ENCODE measurements at regions of chr2 and their contacts with region 1.

Region 1: GRCh38 chr2:127453392-127454171 is 35.4 kb downstream of the PROC start:
- DNase-seq: peak; percentile 85
- ATAC-seq: peak; percentile 88
- H3K4me3 ChIP-seq: peak overlapping the region in 2 of 3 experiments; percentile 27 to 38; a peak in 4 of 6 replicates
- H3K27ac ChIP-seq: peak overlapping the region; percentile 93
- H3K4me1 ChIP-seq: peaks cover 83% of the 10 kb centered on the region
- H3K27me3 ChIP-seq: no peaks in the 10 kb centered on the region
- CTCF ChIP-seq: peak; percentile 94
- EP300 ChIP-seq: peak in 1 of 2 experiments; percentile 51; a peak in 2 of 4 replicates
- POLR2A ChIP-seq: peak; percentile 18 to 43; a peak in 1 of 4 replicates
- RAD21 ChIP-seq: peak; percentile 98

Region 2: GRCh38 chr2:127293748-127294562 is 159.6 kb before region 1 on chr2 and contains the start of gene ERCC3:
- CTCF ChIA-PET with region 1: no interaction called
- POLR2A ChIA-PET with region 1: interaction called, 35 read pairs
- in situ Hi-C with region 1: no loop called
- intact Hi-C with region 1: no loop called
- DNase-seq: peak; percentile 89
- ATAC-seq: peak; percentile 99
- H3K4me3 ChIP-seq: peak within 1 kb of the TSS; percentile 82 to 97 (median 88)
- H3K27ac ChIP-seq: peak within 1 kb of the TSS; percentile 69
- H3K4me1 ChIP-seq: peaks cover 22% of the 10 kb centered on the region
- H3K27me3 ChIP-seq: no peaks in the 10 kb centered on the region; a peak in 1 of 5 replicates
- CTCF ChIP-seq: no peak
- EP300 ChIP-seq: no peak
- POLR2A ChIP-seq: peak; percentile 92 to 97
- RAD21 ChIP-seq: peak; percentile 73
- total RNA-seq, gene ERCC3: 43.3 and 49.7 TPM in 2 replicates

Region 3: GRCh38 chr2:127355386-127356008 is 98.1 kb before region 1 on chr2:
- CTCF ChIA-PET with region 1: interaction called, 18 read pairs
- POLR2A ChIA-PET with region 1: no interaction called
- in situ Hi-C with region 1: no loop called
- intact Hi-C with region 1: loop called (anchors 1 kb)
- DNase-seq: peak; percentile 38
- ATAC-seq: peak; percentile 64; the same call in 2 of the 3 replicates
- H3K4me3 ChIP-seq: no peak overlapping the region
- H3K27ac ChIP-seq: no peak overlapping the region
- H3K4me1 ChIP-seq: peaks cover 60% of the 10 kb centered on the region
- H3K27me3 ChIP-seq: no peaks in the 10 kb centered on the region
- CTCF ChIP-seq: peak; percentile 61
- EP300 ChIP-seq: no peak
- POLR2A ChIP-seq: no peak
- RAD21 ChIP-seq: peak; percentile 23; the same call in 1 of the 2 replicates

Region 4: DNA sequence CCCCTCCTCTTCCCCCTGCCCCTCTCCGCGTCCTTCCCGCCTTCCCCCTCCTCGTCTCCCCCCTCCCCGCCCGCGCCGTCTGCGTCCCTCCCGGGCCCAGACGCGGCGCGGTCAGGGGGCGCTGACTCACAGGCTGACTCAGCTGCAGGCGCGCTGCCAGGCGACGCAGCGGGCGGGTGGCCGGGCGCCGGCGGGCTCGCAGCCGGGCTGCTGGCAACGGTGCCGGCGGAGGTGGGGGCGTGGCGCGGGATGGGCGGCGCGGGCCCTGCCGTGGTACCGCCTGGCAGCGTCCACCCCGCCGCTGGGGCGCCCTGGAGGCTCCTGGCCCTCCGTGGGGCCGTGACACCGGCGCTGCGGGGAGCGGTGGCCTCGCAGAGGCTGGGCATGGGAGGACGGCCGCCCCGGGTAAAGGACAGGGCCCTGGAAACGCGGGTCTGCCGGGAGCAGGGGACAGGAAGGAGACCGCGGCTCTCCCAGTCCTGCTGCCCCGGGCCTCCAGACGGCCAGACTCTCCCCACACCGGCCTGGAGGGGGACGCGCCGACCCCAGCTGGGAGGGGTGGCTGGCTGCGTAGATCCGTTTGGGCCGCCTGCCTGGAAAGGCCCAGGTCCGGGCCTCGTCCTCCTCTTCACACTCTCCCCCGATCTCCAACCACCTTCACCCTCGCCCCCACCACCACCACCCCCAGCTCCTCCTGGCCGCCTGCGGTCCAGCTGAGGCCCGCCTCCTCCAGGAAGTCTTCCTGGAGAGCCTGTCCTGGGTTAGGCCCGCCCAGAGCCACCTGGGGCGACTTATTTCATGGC is 45.4 kb before region 1 on chr2:
- CTCF ChIA-PET with region 1: interaction called, 3 read pairs
- POLR2A ChIA-PET with region 1: interaction called, 12 read pairs
- in situ Hi-C with region 1: no loop called
- intact Hi-C with region 1: no loop called
- DNase-seq: peak; percentile 83
- ATAC-seq: peak; percentile 93
- H3K4me3 ChIP-seq: peak overlapping the region; percentile 71 to 89 (median 77)
- H3K27ac ChIP-seq: peak overlapping the region; percentile 82
- H3K4me1 ChIP-seq: peaks cover 63% of the 10 kb centered on the region
- H3K27me3 ChIP-seq: no peaks in the 10 kb centered on the region
- CTCF ChIP-seq: peak; percentile 46; the same call in 1 of the 2 replicates
- EP300 ChIP-seq: peak in 1 of 2 experiments; percentile 78; a peak in 2 of 4 replicates
- POLR2A ChIP-seq: peak; percentile 28 to 49; a peak in 2 of 4 replicates
- RAD21 ChIP-seq: peak; percentile 87

Region 5: GRCh38 chr2:127422810-127423475 is 30.6 kb before region 1 on chr2:
- CTCF ChIA-PET with region 1: interaction called, 3 read pairs
- POLR2A ChIA-PET with region 1: interaction called, 67 read pairs
- in situ Hi-C with region 1: no loop called
- intact Hi-C with region 1: loop called (anchors 1 kb)
- DNase-seq: no peak
- ATAC-seq: no peak
- H3K4me3 ChIP-seq: no peak overlapping the region
- H3K27ac ChIP-seq: no peak overlapping the region
- H3K4me1 ChIP-seq: peaks cover 41% of the 10 kb centered on the region
- H3K27me3 ChIP-seq: no peaks in the 10 kb centered on the region
- CTCF ChIP-seq: no peak
- EP300 ChIP-seq: no peak
- POLR2A ChIP-seq: no peak
- RAD21 ChIP-seq: no peak

Region 6: GRCh38 chr2:127437781-127438726 is 15.5 kb before region 1 on chr2:
- CTCF ChIA-PET with region 1: interaction called, 12 read pairs
- POLR2A ChIA-PET with region 1: interaction called, 74 read pairs
- in situ Hi-C with region 1: no loop called
- intact Hi-C with region 1: loop called (anchors 1 kb)
- DNase-seq: peak; percentile 99
- ATAC-seq: peak; percentile 99
- H3K4me3 ChIP-seq: peak overlapping the region in 1 of 3 experiments; percentile 31; a peak in 2 of 6 replicates
- H3K27ac ChIP-seq: peak overlapping the region; percentile 94
- H3K4me1 ChIP-seq: peaks cover 50% of the 10 kb centered on the region
- H3K27me3 ChIP-seq: no peaks in the 10 kb centered on the region
- CTCF ChIP-seq: peak; percentile 91
- EP300 ChIP-seq: peak; percentile 86 to 96; a peak in 3 of 4 replicates
- POLR2A ChIP-seq: peak; percentile 81 to 84
- RAD21 ChIP-seq: peak; percentile 88

Region 7: DNA sequence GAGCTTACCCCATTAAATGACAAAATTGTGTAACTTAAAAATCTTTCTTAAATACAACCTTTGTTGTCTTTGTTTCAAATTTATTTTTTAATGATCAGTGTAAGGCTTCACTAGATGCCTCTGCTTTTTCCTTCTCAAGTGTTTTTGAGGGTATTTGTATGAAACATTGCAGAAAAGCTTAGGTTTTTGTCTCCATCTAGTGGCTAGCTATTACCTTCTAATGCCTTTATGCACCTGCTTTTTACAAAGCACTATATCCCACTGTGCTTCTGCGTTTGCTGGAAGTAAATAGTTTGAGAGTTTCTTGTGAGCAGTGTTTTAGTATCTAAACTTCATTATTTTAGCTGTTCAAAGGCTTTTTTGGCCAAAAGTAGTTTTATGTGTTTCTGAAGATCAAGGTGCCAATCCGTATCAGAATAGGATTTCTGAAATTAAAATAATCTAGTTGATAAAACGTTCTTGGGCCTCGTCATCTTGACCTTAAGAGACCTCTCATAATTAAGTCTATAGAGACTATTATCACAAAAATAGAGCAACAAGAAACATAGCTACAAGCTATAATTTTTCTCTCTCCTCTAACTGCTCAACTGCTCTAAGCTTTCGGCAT is 25.7 kb after region 1 on chr2:
- CTCF ChIA-PET with region 1: interaction called, 9 read pairs
- POLR2A ChIA-PET with region 1: interaction called, 17 read pairs
- in situ Hi-C with region 1: no loop called
- intact Hi-C with region 1: loop called (anchors 1 kb)
- DNase-seq: peak; percentile 73
- ATAC-seq: peak; percentile 86
- H3K4me3 ChIP-seq: no peak overlapping the region
- H3K27ac ChIP-seq: no peak overlapping the region
- H3K4me1 ChIP-seq: peaks cover 19% of the 10 kb centered on the region; the same call in 1 of the 2 replicates
- H3K27me3 ChIP-seq: no peaks in the 10 kb centered on the region
- CTCF ChIP-seq: peak; percentile 85
- EP300 ChIP-seq: no peak
- POLR2A ChIP-seq: no peak
- RAD21 ChIP-seq: peak; percentile 87